Psoas muscle (tissue), 8 donors: ENCODE measurements at regions of chr19 and their contacts with region 1.

Region 1: DNA sequence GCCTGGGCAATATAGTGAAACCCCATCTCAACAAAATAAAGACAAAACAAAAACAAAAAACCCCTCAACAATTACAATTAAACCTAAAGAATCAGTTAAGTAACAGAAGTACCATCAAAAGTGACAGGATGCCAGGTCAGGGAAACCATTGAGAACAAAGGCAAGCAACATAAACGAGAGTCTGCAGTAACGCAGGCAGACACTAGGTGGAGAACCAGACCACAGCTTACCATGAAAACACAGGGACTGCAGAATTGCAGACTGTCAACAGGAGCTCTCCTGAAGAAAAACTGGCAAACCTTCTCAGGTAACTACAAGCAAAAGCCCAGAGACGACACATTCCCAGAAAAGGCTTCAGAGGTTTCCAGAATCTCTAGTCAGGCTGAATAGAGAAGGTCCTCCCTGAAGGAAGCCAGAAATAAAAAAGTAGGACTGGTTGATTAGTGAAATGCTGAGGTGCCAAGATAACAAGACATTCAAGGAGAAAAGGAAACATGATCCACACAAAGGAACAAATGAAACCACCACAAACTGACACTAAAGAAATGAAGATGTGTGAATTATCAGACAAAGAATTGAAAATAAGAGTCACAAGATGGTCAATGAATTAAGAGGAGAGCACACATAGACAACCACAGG is 2.2 kb upstream of the ZNF665 start:
- DNase-seq: peak; percentile 57 to 72
- ATAC-seq: peak in 3 of 4 donors; percentile 45 to 63 (median 51)
- H3K4me3 ChIP-seq: no peak overlapping the region
- H3K27ac ChIP-seq: no peak overlapping the region
- H3K4me1 ChIP-seq: peaks cover 3% of the 10 kb centered on the region
- H3K27me3 ChIP-seq: peaks cover 0 to 4% (median 4%) of the 10 kb centered on the region in 3 donors
- CTCF ChIP-seq: peak; percentile 79

Region 2: GRCh38 chr19:53254411-53255341 is 59.3 kb after region 1 on chr19 and contains the start of gene ZNF677:
- intact Hi-C with region 1: loop called in 1 of 2 experiments (anchors 5 kb)
- DNase-seq: peak; percentile 93 to 96
- ATAC-seq: peak; percentile 100
- H3K4me3 ChIP-seq: peak within 1 kb of the TSS; percentile 94
- H3K27ac ChIP-seq: peak within 1 kb of the TSS; percentile 76
- H3K4me1 ChIP-seq: no peaks in the 10 kb centered on the region
- H3K27me3 ChIP-seq: peaks cover 0 to 3% (median 0%) of the 10 kb centered on the region in 3 donors
- CTCF ChIP-seq: no peak
- total RNA-seq, gene ZNF677: 5.1 to 9.7 (median 6.8) TPM

Region 3: GRCh38 chr19:53365134-53365898 is 169.9 kb after region 1 on chr19 and contains the start of gene ZNF525:
- intact Hi-C with region 1: loop called in 1 of 2 experiments (anchors 10 kb)
- DNase-seq: peak; percentile 85 to 90
- ATAC-seq: peak; percentile 73 to 95 (median 81)
- H3K4me3 ChIP-seq: peak within 1 kb of the TSS; percentile 76
- H3K27ac ChIP-seq: peak within 1 kb of the TSS; percentile 46
- H3K4me1 ChIP-seq: no peaks in the 10 kb centered on the region
- H3K27me3 ChIP-seq: peaks cover 0 to 3% (median 0%) of the 10 kb centered on the region in 3 donors
- CTCF ChIP-seq: no peak
- total RNA-seq, gene ZNF525: 1.3 to 2.1 (median 1.7) TPM

Region 4: GRCh38 chr19:53394974-53395839 is 199.8 kb after region 1 on chr19 and contains the start of gene ZNF765:
- intact Hi-C with region 1: loop called in 1 of 2 experiments (anchors 10 kb)
- DNase-seq: peak; percentile 94 to 96
- ATAC-seq: peak; percentile 100
- H3K4me3 ChIP-seq: peak within 1 kb of the TSS; percentile 87
- H3K27ac ChIP-seq: peak within 1 kb of the TSS; percentile 57
- H3K4me1 ChIP-seq: peaks cover 5% of the 10 kb centered on the region
- H3K27me3 ChIP-seq: no peaks in the 10 kb centered on the region
- CTCF ChIP-seq: peak; percentile 43
- total RNA-seq, gene ZNF765: 1.8 to 2.9 (median 2.6) TPM